ENCODE measurements at regions of chrX and their contacts with region 1.

Region 1: GRCh38 chrX:100316987-100317386 is 93.1 kb downstream of the PCDH19 start:
- DNase-seq: peak; percentile 27
- H3K4me3 ChIP-seq: no peak overlapping the region
- H3K27ac ChIP-seq: no peak overlapping the region
- H3K4me1 ChIP-seq: no peaks in the 10 kb centered on the region
- H3K27me3 ChIP-seq: no peaks in the 10 kb centered on the region
- CTCF ChIP-seq: no peak

Region 2: GRCh38 chrX:100083211-100083610 is 233.8 kb before region 1 on chrX:
- CTCF ChIA-PET with region 1: no interaction called
- dilution Hi-C with region 1: no loop called
- in situ Hi-C with region 1: no loop called
- intact Hi-C with region 1: no loop called
- DNase-seq: peak; percentile 69
- H3K4me3 ChIP-seq: no peak overlapping the region
- H3K27ac ChIP-seq: peak overlapping the region; percentile 19
- H3K4me1 ChIP-seq: peaks cover 31% of the 10 kb centered on the region
- H3K27me3 ChIP-seq: no peaks in the 10 kb centered on the region
- CTCF ChIP-seq: no peak

Region 3: DNA sequence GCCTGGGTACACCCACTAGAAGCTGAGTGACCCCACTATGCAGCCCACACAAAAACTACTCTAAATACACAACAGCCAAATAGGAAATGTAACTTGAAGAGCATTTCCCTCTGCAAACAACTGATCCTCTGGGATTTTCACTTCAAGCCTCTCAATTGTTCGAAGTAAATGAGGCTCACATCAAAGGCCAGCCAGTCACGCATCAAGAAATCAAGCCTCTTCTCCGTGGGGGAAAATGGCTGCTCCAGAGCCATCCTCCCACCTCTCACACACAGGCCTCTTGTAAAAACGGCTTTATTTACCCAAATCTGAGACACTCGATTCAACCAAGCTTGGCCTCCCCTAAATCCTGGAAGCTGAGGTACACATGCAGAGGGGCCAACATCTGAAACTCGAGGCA is 78.8 kb after region 1 on chrX:
- CTCF ChIA-PET with region 1: no interaction called
- dilution Hi-C with region 1: loop called (anchors 5 kb)
- in situ Hi-C with region 1: no loop called
- intact Hi-C with region 1: no loop called
- DNase-seq: no peak
- H3K4me3 ChIP-seq: no peak overlapping the region
- H3K27ac ChIP-seq: no peak overlapping the region
- H3K4me1 ChIP-seq: no peaks in the 10 kb centered on the region
- H3K27me3 ChIP-seq: peaks cover 7% of the 10 kb centered on the region
- CTCF ChIP-seq: no peak

Region 4: DNA sequence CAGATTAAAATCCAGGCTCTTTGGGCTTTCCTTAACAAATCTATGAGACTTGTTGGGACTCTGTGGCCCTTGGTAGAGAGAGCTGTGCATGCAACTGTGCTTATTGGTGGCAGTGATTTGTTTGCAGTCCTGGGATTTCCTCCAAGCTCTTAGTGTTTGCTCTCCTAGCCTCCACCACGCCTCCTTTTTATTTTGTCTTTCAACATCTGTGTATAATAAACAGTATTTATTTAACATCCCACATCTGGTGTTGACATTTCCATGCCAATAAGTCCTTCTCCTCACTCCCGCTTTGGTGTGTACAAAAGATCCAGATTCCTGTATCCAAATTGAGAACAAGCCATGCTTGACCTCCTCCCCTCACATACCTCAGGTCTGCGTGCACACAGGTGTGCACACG is 270.9 kb after region 1 on chrX:
- CTCF ChIA-PET with region 1: no interaction called
- dilution Hi-C with region 1: no loop called
- in situ Hi-C with region 1: no loop called
- intact Hi-C with region 1: no loop called
- DNase-seq: no peak
- H3K4me3 ChIP-seq: no peak overlapping the region
- H3K27ac ChIP-seq: no peak overlapping the region
- H3K4me1 ChIP-seq: no peaks in the 10 kb centered on the region
- H3K27me3 ChIP-seq: peaks cover 15% of the 10 kb centered on the region
- CTCF ChIP-seq: no peak